ENCODE measurements at regions of chr6 and their contacts with region 1.

Region 1: DNA sequence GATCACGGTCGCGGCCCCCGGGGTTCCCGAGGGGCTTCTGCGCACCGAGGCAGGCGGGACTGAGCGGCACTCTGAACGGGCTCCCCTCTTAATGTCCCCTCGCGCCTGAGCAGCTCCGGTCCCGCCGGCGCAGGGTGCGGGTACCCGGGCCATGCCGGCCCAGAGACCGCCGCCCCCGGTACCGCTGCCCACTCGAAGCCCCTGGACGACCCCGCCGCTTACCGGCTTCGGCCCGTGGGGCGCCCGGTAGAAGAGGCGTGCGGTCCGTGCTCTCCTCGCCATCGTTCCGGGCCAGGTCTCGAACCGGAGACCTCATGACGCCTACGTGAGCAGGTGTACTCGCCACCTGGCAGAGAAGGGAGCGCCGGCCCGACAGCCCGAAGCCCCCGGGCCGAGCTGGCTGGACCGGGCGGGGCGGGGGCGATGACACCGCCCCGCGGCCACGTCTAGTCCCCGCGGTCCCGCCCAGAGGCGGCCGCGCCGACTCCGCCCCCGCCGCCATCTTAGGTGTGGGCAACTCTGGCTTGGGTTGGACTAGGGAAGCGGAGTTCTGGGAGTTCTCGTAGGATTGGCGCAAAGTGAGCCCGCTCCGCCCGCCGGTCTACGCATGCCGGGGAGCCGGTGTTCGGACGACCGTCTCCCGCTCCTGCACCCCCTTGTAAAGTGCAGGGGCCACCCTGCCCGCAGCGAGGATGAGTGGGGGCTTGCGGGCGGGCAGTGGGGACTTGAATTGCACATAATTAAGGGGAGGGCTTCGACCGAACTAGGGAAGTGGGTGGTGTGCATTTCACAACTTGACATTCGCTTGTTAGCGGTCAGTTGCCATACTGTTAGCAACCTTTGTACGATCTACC is at the start of gene SLC17A5:
- DNase-seq: peak; percentile 76 to 89 (median 82)
- ATAC-seq: peak; percentile 95
- H3K4me3 ChIP-seq: peak within 1 kb of the TSS; percentile 99
- H3K4me3 Mint-ChIP-seq: peak within 1 kb of the TSS; percentile 95 to 100 (median 98)
- H3K27ac ChIP-seq: peak within 1 kb of the TSS; percentile 99
- H3K27ac Mint-ChIP-seq: peak within 1 kb of the TSS; percentile 90 to 99 (median 97)
- H3K4me1 ChIP-seq: peaks cover 10 to 13% of the 10 kb centered on the region in 2 donors
- H3K4me1 Mint-ChIP-seq: peaks cover 17 to 42% (median 37%) of the 10 kb centered on the region in 7 donors
- H3K27me3 ChIP-seq: no peaks in the 10 kb centered on the region
- H3K27me3 Mint-ChIP-seq: no peaks in the 10 kb centered on the region
- total RNA-seq, gene SLC17A5: 6.0 to 13.8 (median 8.9) TPM

Region 2: GRCh38 chr6:73515204-73515655 is 138.6 kb before region 1 on chr6:
- CTCF ChIA-PET with region 1: interaction called, 4 read pairs
- POLR2A ChIA-PET with region 1: interaction called, 92 read pairs
- intact Hi-C with region 1: loop called (anchors 1 kb)
- DNase-seq: no peak
- ATAC-seq: peak; percentile 5
- H3K4me3 ChIP-seq: no peak overlapping the region
- H3K4me3 Mint-ChIP-seq: peak overlapping the region in 8 of 10 donors; percentile 25 to 84 (median 58)
- H3K27ac ChIP-seq: peak overlapping the region; percentile 15
- H3K27ac Mint-ChIP-seq: peak overlapping the region; percentile 3 to 89 (median 66)
- H3K4me1 ChIP-seq: peaks cover 35 to 48% of the 10 kb centered on the region in 2 donors
- H3K4me1 Mint-ChIP-seq: peaks cover 17 to 59% (median 46%) of the 10 kb centered on the region in 7 donors
- H3K27me3 ChIP-seq: no peaks in the 10 kb centered on the region
- H3K27me3 Mint-ChIP-seq: peaks cover 0 to 2% (median 0%) of the 10 kb centered on the region in 5 donors

Region 3: GRCh38 chr6:73585566-73586415 is 68.0 kb before region 1 on chr6:
- CTCF ChIA-PET with region 1: no interaction called
- POLR2A ChIA-PET with region 1: interaction called, 9 read pairs
- intact Hi-C with region 1: loop called (anchors 1 to 2 kb)
- DNase-seq: peak in 7 of 9 donors; percentile 55 to 76 (median 67)
- ATAC-seq: peak; percentile 82
- H3K4me3 ChIP-seq: peak overlapping the region; percentile 51
- H3K4me3 Mint-ChIP-seq: peak overlapping the region; percentile 78 to 90 (median 86)
- H3K27ac ChIP-seq: peak overlapping the region; percentile 89
- H3K27ac Mint-ChIP-seq: peak overlapping the region; percentile 91 to 100 (median 99)
- H3K4me1 ChIP-seq: peaks cover 6 to 16% of the 10 kb centered on the region in 2 donors
- H3K4me1 Mint-ChIP-seq: peaks cover 22 to 27% (median 24%) of the 10 kb centered on the region in 7 donors
- H3K27me3 ChIP-seq: no peaks in the 10 kb centered on the region
- H3K27me3 Mint-ChIP-seq: no peaks in the 10 kb centered on the region

Region 4: DNA sequence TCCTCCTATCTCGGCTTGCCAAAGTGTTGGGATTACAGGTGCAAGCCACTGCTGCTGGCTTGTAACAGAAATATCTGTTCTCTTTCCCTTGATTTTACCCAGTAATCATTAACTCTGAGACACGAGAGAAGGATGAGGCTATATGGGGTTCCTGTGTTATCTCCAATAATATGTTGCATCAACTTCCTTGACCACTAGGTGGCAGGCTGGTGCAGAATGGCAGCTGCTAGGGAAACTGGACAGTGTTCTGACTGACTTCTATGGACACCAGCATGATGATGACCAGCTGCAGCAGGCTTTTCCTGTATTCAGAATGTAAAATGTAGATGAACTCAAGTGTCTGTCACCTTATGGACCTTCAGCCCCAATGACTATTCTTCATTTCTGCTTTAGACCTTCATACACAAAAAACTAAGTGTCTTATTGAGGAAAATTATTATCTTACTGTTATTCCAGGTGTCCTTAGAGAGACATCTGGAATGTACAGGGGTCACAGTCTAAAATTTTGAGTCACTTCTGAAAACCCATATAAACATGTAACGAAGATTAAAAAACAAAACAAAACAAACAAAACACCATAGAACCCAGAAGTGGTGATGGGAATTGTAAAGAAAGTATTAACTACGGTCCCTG is 21.8 kb after region 1 on chr6:
- CTCF ChIA-PET with region 1: interaction called, 3 read pairs
- POLR2A ChIA-PET with region 1: no interaction called
- intact Hi-C with region 1: loop called (anchors 1 kb)
- DNase-seq: peak; percentile 31 to 74 (median 59)
- ATAC-seq: peak; percentile 92
- H3K4me3 ChIP-seq: no peak overlapping the region
- H3K4me3 Mint-ChIP-seq: no peak overlapping the region
- H3K27ac ChIP-seq: no peak overlapping the region
- H3K27ac Mint-ChIP-seq: no peak overlapping the region
- H3K4me1 ChIP-seq: no peaks in the 10 kb centered on the region
- H3K4me1 Mint-ChIP-seq: peaks cover 0 to 4% (median 0%) of the 10 kb centered on the region in 7 donors
- H3K27me3 ChIP-seq: no peaks in the 10 kb centered on the region
- H3K27me3 Mint-ChIP-seq: peaks cover 4 to 23% (median 21%) of the 10 kb centered on the region in 5 donors

Region 5: GRCh38 chr6:73739096-73739495 is 85.3 kb after region 1 on chr6:
- CTCF ChIA-PET with region 1: no interaction called
- POLR2A ChIA-PET with region 1: no interaction called
- intact Hi-C with region 1: no loop called
- DNase-seq: peak in 7 of 9 donors; percentile 31 to 69 (median 57)
- ATAC-seq: peak; percentile 76
- H3K4me3 ChIP-seq: no peak overlapping the region
- H3K4me3 Mint-ChIP-seq: no peak overlapping the region
- H3K27ac ChIP-seq: no peak overlapping the region
- H3K27ac Mint-ChIP-seq: no peak overlapping the region
- H3K4me1 ChIP-seq: no peaks in the 10 kb centered on the region
- H3K4me1 Mint-ChIP-seq: peaks cover 0 to 4% (median 0%) of the 10 kb centered on the region in 7 donors
- H3K27me3 ChIP-seq: no peaks in the 10 kb centered on the region
- H3K27me3 Mint-ChIP-seq: peaks cover 0 to 4% (median 0%) of the 10 kb centered on the region in 5 donors

Region 6: GRCh38 chr6:75230484-75231325 is 1576.9 kb after region 1 on chr6:
- CTCF ChIA-PET with region 1: no interaction called
- POLR2A ChIA-PET with region 1: no interaction called
- intact Hi-C with region 1: no loop called
- DNase-seq: no peak
- ATAC-seq: no peak
- H3K4me3 ChIP-seq: no peak overlapping the region
- H3K4me3 Mint-ChIP-seq: no peak overlapping the region
- H3K27ac ChIP-seq: no peak overlapping the region
- H3K27ac Mint-ChIP-seq: no peak overlapping the region
- H3K4me1 ChIP-seq: no peaks in the 10 kb centered on the region
- H3K4me1 Mint-ChIP-seq: no peaks in the 10 kb centered on the region
- H3K27me3 ChIP-seq: no peaks in the 10 kb centered on the region
- H3K27me3 Mint-ChIP-seq: no peaks in the 10 kb centered on the region

Region 7: GRCh38 chr6:75243333-75244062 is 1589.7 kb after region 1 on chr6 and contains the start of gene COX7A2:
- CTCF ChIA-PET with region 1: interaction called, 3 read pairs
- POLR2A ChIA-PET with region 1: interaction called, 6 read pairs
- intact Hi-C with region 1: loop called in 1 of 2 experiments (anchors 1 kb)
- DNase-seq: peak; percentile 66 to 91 (median 83)
- ATAC-seq: peak; percentile 98
- H3K4me3 ChIP-seq: peak within 1 kb of the TSS; percentile 84
- H3K4me3 Mint-ChIP-seq: peak within 1 kb of the TSS; percentile 88 to 99 (median 98)
- H3K27ac ChIP-seq: peak within 1 kb of the TSS; percentile 90
- H3K27ac Mint-ChIP-seq: peak within 1 kb of the TSS; percentile 94 to 100 (median 98)
- H3K4me1 ChIP-seq: peaks cover 10 to 11% of the 10 kb centered on the region in 2 donors
- H3K4me1 Mint-ChIP-seq: peaks cover 9 to 53% (median 33%) of the 10 kb centered on the region in 7 donors
- H3K27me3 ChIP-seq: no peaks in the 10 kb centered on the region
- H3K27me3 Mint-ChIP-seq: peaks cover 0 to 17% (median 15%) of the 10 kb centered on the region in 5 donors
- total RNA-seq, gene COX7A2: 159 to 395 (median 183) TPM

Measured in naive thymus-derived CD4-positive, alpha-beta T cell (primary cell).